AG04450 (cell line): ENCODE measurements at regions of chr1 and their contacts with region 1.

Region 1: DNA sequence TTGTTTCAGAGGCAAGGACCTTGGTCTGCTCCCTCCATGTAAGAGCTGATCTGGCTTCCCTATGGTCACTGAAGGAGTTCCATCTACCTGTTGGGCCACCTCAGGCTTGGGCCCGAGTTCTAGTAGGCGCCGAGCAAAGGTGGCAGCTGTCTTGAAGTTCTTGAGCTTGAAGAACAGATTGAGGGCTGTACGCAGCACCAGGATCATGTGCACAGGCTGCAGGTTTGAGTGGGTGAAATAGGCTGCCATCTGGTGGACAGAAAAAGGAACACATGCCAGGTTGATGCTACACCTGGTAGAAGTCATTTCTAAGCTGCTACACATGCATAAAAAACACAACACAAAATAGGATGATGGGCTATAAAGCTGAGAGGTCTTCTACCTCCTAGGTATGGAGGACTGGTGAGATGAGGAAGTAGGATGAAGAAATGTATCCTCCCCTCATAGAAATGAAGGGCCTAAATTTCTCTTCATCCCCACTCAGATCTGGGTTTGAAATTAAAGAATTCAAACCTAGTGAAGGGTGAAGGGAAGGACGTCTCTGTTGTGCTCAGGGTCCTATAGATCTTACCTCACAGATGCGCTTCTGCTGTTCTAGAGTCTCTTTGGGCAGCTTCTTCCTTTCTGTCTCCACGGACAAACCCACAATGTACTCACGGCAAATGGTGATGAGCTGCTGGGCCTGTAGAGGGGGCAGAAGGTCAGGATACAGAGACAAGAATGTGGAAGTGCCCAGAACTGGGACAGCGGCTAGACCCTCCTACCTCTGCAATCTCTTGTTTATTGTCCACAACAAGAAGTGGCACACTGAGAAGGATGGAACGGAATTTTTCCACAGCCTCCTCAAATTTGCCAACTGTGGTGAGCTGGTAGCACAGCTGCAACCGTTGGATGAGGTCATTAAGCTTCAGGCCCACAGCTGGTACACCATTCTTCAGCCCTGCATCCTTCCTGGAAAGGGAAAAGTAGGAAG is 6.6 kb upstream of the PEX19 start:
- DNase-seq: peak; percentile 32
- H3K4me3 ChIP-seq: no peak overlapping the region
- H3K27ac ChIP-seq: no peak overlapping the region
- H3K27me3 ChIP-seq: no peaks in the 10 kb centered on the region
- CTCF ChIP-seq: peak; percentile 82

Region 2: DNA sequence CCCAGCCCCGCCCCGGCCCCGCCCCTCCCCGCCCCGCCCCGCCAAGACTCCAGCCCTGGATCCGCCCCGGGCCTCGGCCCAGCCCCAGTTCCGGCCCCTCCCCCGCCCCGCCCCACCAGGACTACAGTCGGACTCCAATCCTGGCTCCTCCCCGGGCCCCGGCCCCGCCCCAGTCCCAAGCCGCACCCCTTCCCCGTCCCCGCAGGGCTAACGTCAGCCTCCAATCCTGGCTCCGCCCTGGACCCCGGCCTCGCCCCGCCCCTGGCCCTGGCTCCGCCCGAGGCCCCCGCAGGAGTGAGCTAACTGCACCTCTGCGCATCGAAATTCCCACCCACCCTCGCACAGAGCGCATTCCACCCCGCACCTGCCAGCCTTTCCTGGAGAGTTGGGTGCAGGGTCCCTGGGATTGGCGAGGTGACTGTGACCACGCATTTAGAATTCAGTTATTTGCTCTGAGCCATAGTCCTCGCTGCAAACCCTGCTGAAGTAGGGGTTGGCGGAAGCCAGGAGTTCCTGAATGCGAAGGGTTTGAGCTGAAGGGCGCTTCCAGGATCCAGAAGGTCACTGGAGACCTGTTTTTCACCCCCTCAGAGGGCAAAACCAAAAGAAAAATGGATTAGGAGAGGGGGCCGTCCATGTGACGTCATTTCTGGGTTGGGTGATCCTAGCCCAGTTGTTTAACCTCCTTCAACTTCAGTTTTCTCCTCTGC is 192.5 kb before region 1 on chr1:
- CTCF ChIA-PET with region 1: interaction called, 84 read pairs
- POLR2A ChIA-PET with region 1: no interaction called
- DNase-seq: peak; percentile 79
- H3K4me3 ChIP-seq: peak overlapping the region; percentile 78
- H3K27ac ChIP-seq: peak overlapping the region; percentile 47
- H3K27me3 ChIP-seq: no peaks in the 10 kb centered on the region
- CTCF ChIP-seq: no peak

Region 3: DNA sequence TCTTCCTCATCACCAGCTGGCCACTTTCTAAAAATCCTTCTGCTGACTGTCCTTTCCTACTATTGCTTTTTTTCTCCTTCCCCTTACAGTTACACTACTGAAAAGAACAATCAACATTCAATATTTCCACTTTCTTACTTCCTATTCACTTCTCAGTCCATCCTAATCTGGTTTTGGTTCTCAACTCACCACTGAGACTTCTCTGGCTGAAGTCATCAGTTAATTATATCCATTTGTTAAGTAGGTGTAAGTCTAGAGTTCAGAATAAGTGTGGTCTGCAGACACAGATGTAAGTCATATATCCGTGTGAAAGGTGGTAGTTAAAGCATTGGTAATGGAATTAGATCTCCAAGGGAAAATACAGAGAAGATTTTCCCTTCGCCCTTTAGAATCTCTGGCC is 64.9 kb before region 1 on chr1:
- CTCF ChIA-PET with region 1: interaction called, 29 read pairs
- POLR2A ChIA-PET with region 1: no interaction called
- DNase-seq: no peak
- H3K4me3 ChIP-seq: no peak overlapping the region
- H3K27ac ChIP-seq: no peak overlapping the region
- H3K27me3 ChIP-seq: no peaks in the 10 kb centered on the region
- CTCF ChIP-seq: no peak

Region 4: GRCh38 chr1:160261893-160262794 is 29.4 kb before region 1 on chr1 and contains the start of gene DCAF8:
- CTCF ChIA-PET with region 1: interaction called, 28 read pairs
- POLR2A ChIA-PET with region 1: interaction called, 6 read pairs
- DNase-seq: peak; percentile 93
- H3K4me3 ChIP-seq: peak within 1 kb of the TSS; percentile 100
- H3K27ac ChIP-seq: peak within 1 kb of the TSS; percentile 94
- H3K27me3 ChIP-seq: no peaks in the 10 kb centered on the region
- CTCF ChIP-seq: no peak
- polyA plus RNA-seq, gene DCAF8: 108 and 111 TPM in 2 replicates

Region 5: DNA sequence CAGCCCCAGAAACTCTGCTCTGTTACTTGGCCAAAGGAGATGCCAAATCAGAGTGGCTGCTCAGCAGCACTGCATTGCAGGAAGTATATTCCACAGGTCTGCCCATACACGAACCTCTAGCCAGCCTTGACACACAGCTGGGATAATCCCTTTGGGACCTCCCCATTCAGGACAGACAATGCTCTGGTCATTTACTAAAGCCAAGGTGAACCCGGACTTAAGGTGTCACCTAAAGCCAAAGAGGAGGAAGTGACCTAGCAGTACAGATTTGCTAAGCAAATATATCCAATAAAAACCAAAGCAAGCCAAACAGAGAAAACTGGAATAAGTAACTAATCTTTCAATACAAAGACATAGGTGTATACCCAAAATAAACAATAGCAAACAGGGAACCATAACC is 23.8 kb after region 1 on chr1:
- CTCF ChIA-PET with region 1: interaction called, 43 read pairs
- POLR2A ChIA-PET with region 1: no interaction called
- DNase-seq: no peak
- H3K4me3 ChIP-seq: no peak overlapping the region
- H3K27ac ChIP-seq: no peak overlapping the region
- H3K27me3 ChIP-seq: no peaks in the 10 kb centered on the region
- CTCF ChIP-seq: no peak

Region 6: GRCh38 chr1:160376525-160377131 is 85.1 kb after region 1 on chr1:
- CTCF ChIA-PET with region 1: interaction called, 25 read pairs
- POLR2A ChIA-PET with region 1: no interaction called
- DNase-seq: peak; percentile 37
- H3K4me3 ChIP-seq: no peak overlapping the region
- H3K27ac ChIP-seq: no peak overlapping the region
- H3K27me3 ChIP-seq: peaks cover 2% of the 10 kb centered on the region
- CTCF ChIP-seq: peak; percentile 99

Region 7: DNA sequence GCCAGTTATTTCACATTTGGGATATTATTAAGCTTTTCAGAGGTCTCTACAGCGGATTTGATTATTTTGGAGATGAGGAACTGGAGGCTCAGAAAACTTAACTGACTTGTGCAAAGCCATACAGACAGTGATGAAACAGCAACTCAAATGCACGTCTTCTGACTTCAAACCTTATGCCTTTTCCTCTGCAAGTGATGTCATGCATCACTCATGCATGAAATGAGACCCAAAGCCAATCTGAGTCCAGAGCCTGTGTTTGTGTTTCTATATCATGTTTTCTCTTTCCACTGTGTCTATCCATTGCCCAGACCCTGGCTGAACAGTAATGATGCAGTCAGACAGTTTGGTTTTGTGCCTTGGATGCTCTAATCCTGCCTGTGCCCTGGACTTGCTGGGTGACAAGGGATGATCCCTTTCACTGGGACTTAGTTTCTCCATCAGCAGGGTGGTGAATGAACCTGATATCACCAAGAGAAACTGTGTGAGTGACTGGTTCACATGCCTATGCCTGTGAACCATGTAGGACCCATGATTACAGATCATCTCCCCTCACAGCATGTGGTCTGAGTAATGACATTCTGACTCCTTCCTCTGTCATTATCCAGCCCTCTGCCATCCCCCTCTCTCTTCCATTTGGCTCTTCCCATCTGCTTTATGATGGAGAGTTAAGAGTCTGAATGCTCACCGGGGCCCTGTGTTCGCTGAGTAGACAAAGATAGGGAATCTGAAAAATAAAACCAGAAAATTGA is 198.2 kb after region 1 on chr1:
- CTCF ChIA-PET with region 1: no interaction called
- POLR2A ChIA-PET with region 1: no interaction called
- DNase-seq: no peak
- H3K4me3 ChIP-seq: no peak overlapping the region
- H3K27ac ChIP-seq: no peak overlapping the region
- H3K27me3 ChIP-seq: no peaks in the 10 kb centered on the region
- CTCF ChIP-seq: no peak